GM10248 (cell line): ENCODE measurements at regions of chr5 and their contacts with region 1.

Region 1: DNA sequence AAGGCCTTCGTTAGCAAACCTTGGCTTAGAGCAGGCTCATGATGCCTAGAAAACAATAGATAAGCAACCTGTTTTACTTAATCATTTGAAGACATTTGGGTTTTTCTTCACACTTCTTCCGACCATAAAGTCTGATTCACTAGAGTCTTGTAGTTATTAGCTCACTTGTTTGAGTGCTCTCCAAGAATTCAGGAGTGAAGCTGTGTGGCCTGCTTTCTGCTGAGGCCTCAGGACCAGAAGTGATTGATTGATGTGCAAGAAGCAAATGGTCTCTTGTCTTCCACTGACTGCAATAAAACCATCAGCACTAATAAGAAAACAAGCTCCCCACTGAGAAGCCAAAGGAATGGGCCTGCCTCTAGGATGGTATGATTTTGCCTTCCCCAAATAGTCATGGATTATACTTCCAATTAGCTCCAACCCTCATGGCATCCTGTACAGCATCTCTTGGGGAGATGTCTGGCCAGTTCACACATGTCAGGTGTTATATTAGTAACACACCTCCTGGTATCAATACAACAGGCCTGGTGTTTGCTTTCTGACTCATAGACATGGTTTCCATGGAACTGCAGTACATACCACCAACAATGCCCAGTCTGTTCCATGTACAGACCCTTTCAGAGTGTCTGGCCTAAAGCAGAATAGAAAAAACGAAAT is 317.6 kb downstream of the CWC27 start:
- DNase-seq: no peak
- CTCF ChIP-seq: no peak

Region 2: GRCh38 chr5:65102828-65103711 is 16.7 kb after region 1 on chr5:
- CTCF ChIA-PET with region 1: interaction called, 12 read pairs
- POLR2A ChIA-PET with region 1: no interaction called
- DNase-seq: peak; percentile 79
- CTCF ChIP-seq: peak; percentile 30

Region 3: DNA sequence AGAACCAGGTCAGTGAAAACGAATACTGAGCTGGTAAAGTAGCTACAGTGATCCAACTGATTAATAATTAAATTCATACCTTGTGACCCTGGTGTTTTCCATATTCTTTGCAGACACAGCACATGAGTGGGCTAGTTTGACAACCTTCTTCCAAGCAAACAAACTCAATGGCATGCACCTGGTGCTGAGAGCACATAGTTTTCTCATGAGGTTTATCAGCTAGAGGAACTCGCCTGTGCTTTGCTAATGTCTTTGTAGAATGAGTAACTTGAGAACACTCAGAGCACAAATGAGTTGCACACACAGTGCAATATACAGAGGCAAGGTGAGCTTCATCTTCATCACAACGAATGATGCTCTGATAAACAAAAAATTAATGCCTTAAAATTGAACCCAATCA is 525.2 kb after region 1 on chr5:
- CTCF ChIA-PET with region 1: no interaction called
- POLR2A ChIA-PET with region 1: no interaction called
- DNase-seq: no peak
- CTCF ChIP-seq: no peak